CD8-positive, alpha-beta T cell (primary cell): ENCODE measurements at regions of chr13 and their contacts with region 1.

Region 1: GRCh38 chr13:41179593-41180250 is 14.6 kb downstream of the KBTBD7 start:
- DNase-seq: no peak
- ATAC-seq: no peak
- H3K4me3 ChIP-seq: no peak overlapping the region
- H3K4me3 Mint-ChIP-seq: no peak overlapping the region
- H3K27ac ChIP-seq: no peak overlapping the region
- H3K27ac Mint-ChIP-seq: no peak overlapping the region
- H3K4me1 ChIP-seq: no peaks in the 10 kb centered on the region
- H3K4me1 Mint-ChIP-seq: no peaks in the 10 kb centered on the region
- H3K27me3 ChIP-seq: no peaks in the 10 kb centered on the region
- H3K27me3 Mint-ChIP-seq: no peaks in the 10 kb centered on the region
- CTCF ChIP-seq: no peak

Region 2: DNA sequence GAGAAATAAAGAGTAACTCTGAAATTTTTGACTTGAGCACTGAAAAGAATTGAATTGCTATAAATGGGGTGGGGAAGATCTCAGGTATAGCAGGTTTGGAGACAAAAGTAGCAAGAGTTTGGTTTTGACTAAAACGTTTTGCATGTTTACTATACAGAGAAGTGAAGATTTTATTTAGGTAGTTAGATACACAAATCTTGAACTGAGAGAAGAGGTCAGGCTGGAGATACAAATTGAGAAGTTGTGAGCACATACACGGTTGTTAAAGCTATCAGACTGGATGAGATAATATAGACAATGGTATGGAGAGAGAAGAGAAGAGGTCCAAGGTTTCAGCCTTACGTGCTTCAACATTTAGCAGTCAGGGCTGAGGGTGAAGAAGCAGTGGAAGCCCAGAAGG is 934.2 kb before region 1 on chr13:
- CTCF ChIA-PET with region 1: no interaction called
- POLR2A ChIA-PET with region 1: no interaction called
- intact Hi-C with region 1: no loop called
- DNase-seq: no peak
- ATAC-seq: no peak
- H3K4me3 ChIP-seq: no peak overlapping the region
- H3K4me3 Mint-ChIP-seq: no peak overlapping the region
- H3K27ac ChIP-seq: no peak overlapping the region
- H3K27ac Mint-ChIP-seq: no peak overlapping the region
- H3K4me1 ChIP-seq: peaks cover 3% of the 10 kb centered on the region
- H3K4me1 Mint-ChIP-seq: peaks cover 4% of the 10 kb centered on the region
- H3K27me3 ChIP-seq: no peaks in the 10 kb centered on the region
- H3K27me3 Mint-ChIP-seq: no peaks in the 10 kb centered on the region
- CTCF ChIP-seq: no peak

Region 3: DNA sequence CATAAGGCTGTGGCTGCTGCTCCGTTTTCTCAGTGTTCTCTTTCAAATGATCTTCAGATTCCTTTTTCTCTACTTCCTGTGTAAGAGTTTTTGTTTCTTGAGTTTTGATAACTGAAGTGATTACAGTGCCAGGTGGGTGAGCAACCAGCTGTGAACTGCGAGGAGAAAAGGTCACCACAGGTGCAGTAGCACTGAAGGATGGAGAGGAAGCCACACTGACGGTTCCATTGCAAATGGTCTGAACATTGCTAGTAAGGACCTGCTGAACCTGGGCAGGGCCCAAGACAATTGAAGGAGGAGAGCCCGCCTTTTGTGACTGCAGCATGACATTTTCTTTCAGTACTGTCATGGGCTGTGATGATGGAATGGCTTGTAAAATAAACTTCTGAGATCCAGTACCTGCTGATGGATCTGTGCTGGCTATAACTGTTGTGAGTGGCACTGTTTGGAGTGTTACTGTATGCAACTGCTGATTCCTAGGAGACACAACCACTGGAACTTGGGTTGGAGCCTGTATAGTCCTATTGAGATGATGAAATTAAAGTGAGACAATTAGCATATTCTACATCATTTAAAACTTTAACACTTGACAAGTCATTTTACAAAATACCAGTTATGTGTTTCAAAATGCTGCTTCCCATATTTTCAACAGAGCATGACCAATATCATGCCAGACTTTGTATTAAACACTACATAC is 246.1 kb before region 1 on chr13:
- CTCF ChIA-PET with region 1: no interaction called
- POLR2A ChIA-PET with region 1: no interaction called
- intact Hi-C with region 1: no loop called
- DNase-seq: no peak
- ATAC-seq: peak; percentile 23
- H3K4me3 ChIP-seq: no peak overlapping the region
- H3K4me3 Mint-ChIP-seq: peak overlapping the region; percentile 16
- H3K27ac ChIP-seq: peak overlapping the region in 1 of 2 experiments; percentile 41
- H3K27ac Mint-ChIP-seq: peak overlapping the region; percentile 73
- H3K4me1 ChIP-seq: peaks cover 13% of the 10 kb centered on the region
- H3K4me1 Mint-ChIP-seq: peaks cover 48% of the 10 kb centered on the region
- H3K27me3 ChIP-seq: no peaks in the 10 kb centered on the region
- H3K27me3 Mint-ChIP-seq: no peaks in the 10 kb centered on the region
- CTCF ChIP-seq: no peak

Region 4: DNA sequence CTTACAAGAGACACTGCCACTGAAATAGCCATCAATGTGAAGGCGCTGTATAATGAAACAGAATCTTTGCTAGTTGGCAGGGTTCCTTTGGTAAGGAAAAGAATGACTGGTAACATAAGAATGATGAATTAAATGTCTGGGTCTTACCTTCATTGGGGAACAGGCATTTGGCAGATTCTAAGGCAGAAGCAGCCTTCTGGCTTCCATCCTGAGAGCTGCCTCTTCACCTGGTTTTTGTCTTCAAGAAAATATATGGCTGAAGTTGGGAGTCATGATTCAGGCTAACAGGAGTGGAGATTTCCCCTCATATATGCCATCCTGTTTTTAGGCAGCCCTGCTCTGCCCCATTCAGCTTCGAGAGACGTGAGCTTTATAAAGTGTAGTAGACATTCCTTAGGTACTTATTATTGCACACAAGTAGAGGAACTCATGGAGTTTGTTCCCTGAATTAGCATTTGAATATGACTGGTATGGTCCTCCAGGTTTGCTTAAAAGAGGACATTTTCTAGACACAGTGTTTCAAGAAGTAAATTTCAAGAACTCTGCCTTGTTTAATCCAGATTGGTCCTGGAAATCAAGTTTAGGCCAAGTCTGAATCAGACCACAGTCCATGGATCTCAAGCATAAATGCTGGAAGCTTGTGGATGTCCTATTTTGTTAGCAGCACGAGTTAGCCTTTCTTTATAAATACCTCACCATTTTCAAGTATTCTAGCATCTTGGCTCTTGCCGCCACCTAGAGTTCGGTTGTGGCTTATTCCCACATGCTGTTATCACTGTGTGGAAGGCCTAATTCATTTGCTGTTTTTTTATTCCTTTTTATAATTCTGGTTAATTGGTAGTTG is 1036.1 kb after region 1 on chr13:
- CTCF ChIA-PET with region 1: no interaction called
- POLR2A ChIA-PET with region 1: no interaction called
- intact Hi-C with region 1: loop called in 1 of 2 experiments (anchors 5 kb)
- DNase-seq: peak in 2 of 9 experiments; percentile 15 to 36
- ATAC-seq: no peak
- H3K4me3 ChIP-seq: no peak overlapping the region
- H3K4me3 Mint-ChIP-seq: no peak overlapping the region
- H3K27ac ChIP-seq: no peak overlapping the region
- H3K27ac Mint-ChIP-seq: no peak overlapping the region
- H3K4me1 ChIP-seq: no peaks in the 10 kb centered on the region
- H3K4me1 Mint-ChIP-seq: no peaks in the 10 kb centered on the region
- H3K27me3 ChIP-seq: no peaks in the 10 kb centered on the region
- H3K27me3 Mint-ChIP-seq: no peaks in the 10 kb centered on the region
- CTCF ChIP-seq: peak; percentile 40